A673 (cell line): ENCODE measurements at regions of chr2 and their contacts with region 1.

Region 1: GRCh38 chr2:133844214-133844892 is 276.1 kb upstream of the NCKAP5 start:
- DNase-seq: peak; percentile 88
- H3K4me3 ChIP-seq: no peak overlapping the region
- H3K27ac ChIP-seq: no peak overlapping the region
- H3K4me1 ChIP-seq: peaks cover 41% of the 10 kb centered on the region
- H3K27me3 ChIP-seq: no peaks in the 10 kb centered on the region
- CTCF ChIP-seq: peak; percentile 94

Region 2: DNA sequence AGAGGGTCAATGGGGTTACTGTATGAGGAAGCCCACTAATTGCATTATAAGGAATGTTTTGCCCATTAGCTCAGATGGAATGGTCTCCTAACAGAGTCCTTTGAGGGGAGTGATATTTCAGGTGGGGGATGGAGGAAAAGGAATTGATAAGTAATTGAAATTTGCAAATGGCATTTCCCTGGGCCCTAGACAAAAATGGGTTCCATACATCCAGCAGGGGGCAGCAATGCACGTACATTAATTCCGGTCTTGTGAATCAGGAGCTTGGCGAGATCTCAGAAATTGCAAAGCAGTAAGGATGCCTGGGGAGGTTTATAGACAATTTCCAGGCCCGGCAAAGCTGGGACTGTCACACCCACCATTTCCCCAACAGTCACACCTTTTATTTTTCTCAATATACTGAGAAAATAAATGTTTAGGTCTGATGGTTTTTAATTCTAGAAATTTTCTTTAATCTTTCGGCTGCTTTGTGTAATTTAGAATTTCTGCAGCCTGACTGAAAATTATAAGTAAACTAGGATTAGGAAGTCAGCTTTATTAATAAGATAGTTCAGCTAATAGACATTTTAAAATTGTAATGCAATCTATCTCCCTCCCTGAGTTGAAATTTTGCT is 1297.2 kb before region 1 on chr2:
- CTCF ChIA-PET with region 1: interaction called, 10 read pairs
- POLR2A ChIA-PET with region 1: no interaction called
- intact Hi-C with region 1: loop called (anchors 1 kb)
- DNase-seq: peak; percentile 88
- H3K4me3 ChIP-seq: no peak overlapping the region
- H3K27ac ChIP-seq: no peak overlapping the region
- H3K4me1 ChIP-seq: peaks cover 14% of the 10 kb centered on the region
- H3K27me3 ChIP-seq: no peaks in the 10 kb centered on the region
- CTCF ChIP-seq: peak; percentile 82

Region 3: GRCh38 chr2:133171393-133172004 is 672.9 kb before region 1 on chr2:
- CTCF ChIA-PET with region 1: no interaction called
- POLR2A ChIA-PET with region 1: no interaction called
- intact Hi-C with region 1: loop called (anchors 5 kb)
- DNase-seq: peak; percentile 89
- H3K4me3 ChIP-seq: no peak overlapping the region
- H3K27ac ChIP-seq: no peak overlapping the region
- H3K4me1 ChIP-seq: peaks cover 60% of the 10 kb centered on the region
- H3K27me3 ChIP-seq: no peaks in the 10 kb centered on the region
- CTCF ChIP-seq: peak; percentile 83

Region 4: DNA sequence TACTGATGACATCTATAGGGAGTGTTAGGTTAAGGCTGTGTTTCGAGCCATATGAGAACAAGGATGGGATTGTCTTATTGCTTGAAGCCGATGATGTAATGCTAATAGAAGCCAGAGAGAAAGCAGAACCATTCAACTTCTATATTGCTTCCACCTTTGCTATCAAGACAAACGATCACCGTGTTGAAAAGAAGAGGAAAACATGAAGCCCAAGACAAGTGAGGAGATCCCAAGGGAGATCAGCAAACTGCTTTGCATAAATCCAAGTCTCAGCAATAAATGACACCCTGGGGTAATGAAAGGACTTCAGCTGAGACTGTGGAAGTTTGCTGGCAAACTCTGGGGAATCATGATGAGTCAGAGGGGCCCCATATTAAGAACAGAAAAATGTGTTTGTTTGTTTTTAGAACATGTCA is 482.3 kb before region 1 on chr2:
- CTCF ChIA-PET with region 1: no interaction called
- POLR2A ChIA-PET with region 1: no interaction called
- intact Hi-C with region 1: loop called (anchors 5 kb)
- DNase-seq: peak; percentile 98
- H3K4me3 ChIP-seq: no peak overlapping the region
- H3K27ac ChIP-seq: peak overlapping the region; percentile 75
- H3K4me1 ChIP-seq: peaks cover 47% of the 10 kb centered on the region
- H3K27me3 ChIP-seq: no peaks in the 10 kb centered on the region
- CTCF ChIP-seq: no peak

Region 5: GRCh38 chr2:133377021-133377481 is 467.3 kb before region 1 on chr2:
- CTCF ChIA-PET with region 1: no interaction called
- POLR2A ChIA-PET with region 1: no interaction called
- intact Hi-C with region 1: no loop called
- DNase-seq: no peak
- H3K4me3 ChIP-seq: no peak overlapping the region
- H3K27ac ChIP-seq: no peak overlapping the region
- H3K4me1 ChIP-seq: peaks cover 12% of the 10 kb centered on the region
- H3K27me3 ChIP-seq: no peaks in the 10 kb centered on the region
- CTCF ChIP-seq: no peak

Region 6: DNA sequence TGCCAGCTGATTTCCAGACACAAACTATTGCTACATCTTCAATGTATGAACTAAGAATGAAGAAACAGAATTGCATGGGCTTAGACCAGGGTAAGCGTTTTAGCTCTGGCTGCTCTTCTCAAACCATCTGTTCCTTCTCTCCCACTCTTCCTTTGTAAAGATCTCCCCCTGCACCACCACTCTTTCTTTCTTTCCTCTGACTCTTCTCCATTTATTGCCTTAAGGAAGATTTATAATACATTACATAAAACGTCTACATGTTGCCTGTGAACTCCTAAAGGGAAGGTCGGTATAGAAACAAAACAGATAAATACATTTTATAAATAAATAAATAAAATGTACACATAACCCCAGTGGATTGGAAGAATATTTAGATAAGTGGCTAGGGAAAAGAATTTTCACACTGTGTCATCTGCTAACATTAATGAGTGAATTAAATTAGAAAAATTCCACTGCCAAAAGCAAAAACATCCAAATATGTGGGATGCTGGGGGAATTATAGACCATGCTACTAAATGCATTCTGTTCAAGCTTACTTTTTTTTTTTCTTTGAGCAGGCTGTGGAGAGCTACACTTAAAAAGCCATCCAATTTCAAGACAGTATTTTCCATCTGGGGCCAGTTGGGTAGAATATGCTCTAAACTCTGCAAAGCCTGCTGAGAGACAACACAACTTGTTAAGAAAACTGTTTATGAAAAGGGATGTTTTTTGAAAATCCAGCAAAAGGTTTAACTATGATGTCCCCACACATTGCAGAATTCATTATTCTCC is 317.6 kb before region 1 on chr2:
- CTCF ChIA-PET with region 1: interaction called, 5 read pairs
- POLR2A ChIA-PET with region 1: no interaction called
- intact Hi-C with region 1: loop called (anchors 2 kb)
- DNase-seq: peak; percentile 92
- H3K4me3 ChIP-seq: no peak overlapping the region
- H3K27ac ChIP-seq: peak overlapping the region; percentile 98
- H3K4me1 ChIP-seq: peaks cover 73% of the 10 kb centered on the region
- H3K27me3 ChIP-seq: no peaks in the 10 kb centered on the region
- CTCF ChIP-seq: no peak

Region 7: DNA sequence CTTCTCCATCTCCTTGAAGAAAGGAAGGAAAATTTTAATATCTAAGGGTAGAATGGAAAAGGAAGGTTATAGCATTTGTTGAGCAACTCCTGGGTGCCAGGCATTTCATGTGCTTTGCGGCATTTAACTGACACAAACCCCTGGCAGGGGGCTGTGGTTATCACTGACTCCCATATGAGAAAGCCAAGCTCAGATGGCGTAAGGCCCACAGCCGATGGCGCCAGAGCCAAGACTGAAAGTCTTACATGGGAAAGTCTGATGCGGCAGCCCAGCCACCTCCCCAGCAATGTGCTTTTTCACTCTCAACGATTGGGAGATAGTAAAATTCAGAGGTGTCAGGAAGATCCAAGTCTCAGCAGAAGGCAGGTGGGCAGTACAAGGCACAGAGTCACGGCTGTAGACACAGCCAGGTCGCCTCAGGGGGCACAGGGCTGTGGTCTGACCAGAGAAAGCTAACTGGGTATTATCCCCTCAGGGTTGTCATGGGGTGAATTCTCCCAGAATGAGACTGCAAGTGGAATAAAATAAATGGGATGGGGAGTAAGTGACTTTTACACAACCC is 48.1 kb after region 1 on chr2:
- CTCF ChIA-PET with region 1: no interaction called
- POLR2A ChIA-PET with region 1: no interaction called
- intact Hi-C with region 1: no loop called
- DNase-seq: no peak
- H3K4me3 ChIP-seq: no peak overlapping the region
- H3K27ac ChIP-seq: no peak overlapping the region
- H3K4me1 ChIP-seq: no peaks in the 10 kb centered on the region
- H3K27me3 ChIP-seq: peaks cover 5% of the 10 kb centered on the region
- CTCF ChIP-seq: no peak